Right lobe of liver (tissue), 6 donors: ENCODE measurements at regions of chr1 and their contacts with region 1.

Region 1: GRCh38 chr1:210455840-210456603 is 127.3 kb downstream of the HHAT start:
- DNase-seq: no peak
- ATAC-seq: no peak
- H3K4me3 ChIP-seq: no peak overlapping the region
- H3K27ac ChIP-seq: no peak overlapping the region
- H3K4me1 ChIP-seq: no peaks in the 10 kb centered on the region
- H3K27me3 ChIP-seq: no peaks in the 10 kb centered on the region
- CTCF ChIP-seq: no peak
- POLR2A ChIP-seq: no peak

Region 2: DNA sequence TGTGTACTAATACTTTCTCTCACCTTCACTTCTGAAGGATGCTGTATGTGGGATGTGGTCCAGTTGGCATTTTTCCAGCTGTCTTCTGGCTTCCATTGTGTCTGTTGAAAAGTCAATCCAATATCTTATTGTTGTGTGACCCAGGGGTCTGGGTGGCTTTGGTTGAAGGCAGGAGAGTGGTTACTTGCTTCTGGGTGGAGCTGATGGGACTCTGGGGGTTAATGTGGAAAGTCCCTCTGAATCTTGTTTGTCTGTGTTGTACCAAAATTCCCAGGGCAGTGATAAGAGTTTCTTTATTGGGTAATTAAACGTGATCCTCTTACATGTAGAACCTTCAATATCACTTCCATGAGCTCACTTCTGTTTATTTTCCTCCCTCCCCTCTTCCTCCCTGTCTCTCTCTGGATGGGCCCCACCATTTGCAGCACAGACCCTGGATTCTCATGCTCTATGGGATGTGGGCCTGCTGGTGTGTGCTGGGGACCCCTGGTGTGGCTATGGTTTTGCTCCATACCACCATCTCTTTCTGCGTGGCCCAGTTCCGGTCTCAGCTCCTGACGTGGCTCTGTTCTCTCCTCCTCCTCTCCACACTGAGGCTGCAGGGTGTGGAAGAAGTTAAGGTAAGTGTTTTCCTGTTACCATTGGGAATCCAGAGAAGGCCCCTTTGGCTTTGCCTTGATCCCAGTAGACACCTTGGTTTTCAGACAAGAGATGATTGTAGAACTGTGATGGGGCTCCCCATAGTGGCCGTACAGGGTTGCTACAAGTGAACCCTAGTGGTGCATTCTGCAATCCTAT is 55.8 kb before region 1 on chr1:
- intact Hi-C with region 1: no loop called
- DNase-seq: peak in 2 of 3 donors; percentile 37 to 62
- ATAC-seq: peak; percentile 99 to 100 (median 100)
- H3K4me3 ChIP-seq: no peak overlapping the region
- H3K27ac ChIP-seq: no peak overlapping the region
- H3K4me1 ChIP-seq: no peaks in the 10 kb centered on the region
- H3K27me3 ChIP-seq: no peaks in the 10 kb centered on the region
- CTCF ChIP-seq: peak; percentile 79 to 86 (median 84)
- POLR2A ChIP-seq: no peak

Region 3: GRCh38 chr1:210641582-210641981 is 185.6 kb after region 1 on chr1:
- intact Hi-C with region 1: no loop called
- DNase-seq: no peak
- ATAC-seq: no peak
- H3K4me3 ChIP-seq: no peak overlapping the region
- H3K27ac ChIP-seq: no peak overlapping the region
- H3K4me1 ChIP-seq: peaks cover 0 to 4% (median 0%) of the 10 kb centered on the region in 4 donors
- H3K27me3 ChIP-seq: no peaks in the 10 kb centered on the region
- CTCF ChIP-seq: no peak
- POLR2A ChIP-seq: no peak

Region 4: DNA sequence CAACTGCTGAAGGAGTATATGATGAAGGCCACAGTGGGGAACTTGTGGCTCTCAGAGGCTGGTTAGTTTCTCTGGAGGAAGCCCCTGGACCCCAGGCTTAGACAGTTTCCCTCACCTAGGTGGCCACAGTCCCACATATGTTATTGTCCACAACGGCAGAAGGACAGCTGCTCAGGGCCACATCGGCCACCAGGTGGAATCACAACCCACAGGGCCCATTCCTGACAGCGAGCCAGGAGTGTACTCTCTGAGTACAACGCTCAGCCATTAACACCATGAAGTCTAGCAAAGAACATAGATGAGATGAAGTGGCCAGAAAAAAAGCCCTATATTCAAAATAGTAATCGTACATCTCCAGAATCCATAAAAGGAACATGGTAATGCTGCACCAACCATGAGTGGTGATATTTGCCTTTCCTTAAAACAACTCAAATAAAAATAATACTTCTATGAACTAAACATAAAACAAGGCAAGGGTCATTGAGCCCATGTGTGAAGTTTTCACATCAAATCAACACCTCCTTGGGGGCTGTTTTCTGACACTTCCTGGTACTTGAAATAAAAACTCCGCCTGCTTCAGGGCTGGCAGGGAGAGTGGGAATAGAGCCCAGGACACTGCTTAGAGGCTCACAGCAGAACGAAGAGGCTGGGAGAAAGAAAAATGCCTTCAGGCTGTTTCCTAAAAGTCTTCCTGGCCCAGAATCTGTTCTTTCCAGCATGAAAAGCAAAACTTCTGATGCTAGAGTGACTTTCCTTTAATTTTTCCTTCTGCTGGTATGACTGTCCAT is 256.0 kb after region 1 on chr1:
- intact Hi-C with region 1: loop called in 1 of 2 experiments (anchors 10 kb)
- DNase-seq: peak in 2 of 3 donors; percentile 39 to 63
- ATAC-seq: peak; percentile 70 to 82 (median 77)
- H3K4me3 ChIP-seq: no peak overlapping the region
- H3K27ac ChIP-seq: no peak overlapping the region
- H3K4me1 ChIP-seq: peaks cover 0 to 11% (median 1%) of the 10 kb centered on the region in 4 donors
- H3K27me3 ChIP-seq: no peaks in the 10 kb centered on the region
- CTCF ChIP-seq: peak; percentile 31 to 46 (median 44)
- POLR2A ChIP-seq: no peak